ENCODE measurements at regions of chr1 and their contacts with region 1.

Region 1: GRCh38 chr1:204806943-204807687 is 63.5 kb upstream of the NFASC start:
- DNase-seq: peak; percentile 32 to 48
- ATAC-seq: peak; percentile 86 to 92
- H3K4me3 ChIP-seq: peak overlapping the region; percentile 43 to 72 (median 49)
- H3K27ac ChIP-seq: no peak overlapping the region
- H3K4me1 ChIP-seq: no peaks in the 10 kb centered on the region
- H3K27me3 ChIP-seq: no peaks in the 10 kb centered on the region
- CTCF ChIP-seq: peak; percentile 72 to 93 (median 88)
- POLR2A ChIP-seq: no peak

Region 2: DNA sequence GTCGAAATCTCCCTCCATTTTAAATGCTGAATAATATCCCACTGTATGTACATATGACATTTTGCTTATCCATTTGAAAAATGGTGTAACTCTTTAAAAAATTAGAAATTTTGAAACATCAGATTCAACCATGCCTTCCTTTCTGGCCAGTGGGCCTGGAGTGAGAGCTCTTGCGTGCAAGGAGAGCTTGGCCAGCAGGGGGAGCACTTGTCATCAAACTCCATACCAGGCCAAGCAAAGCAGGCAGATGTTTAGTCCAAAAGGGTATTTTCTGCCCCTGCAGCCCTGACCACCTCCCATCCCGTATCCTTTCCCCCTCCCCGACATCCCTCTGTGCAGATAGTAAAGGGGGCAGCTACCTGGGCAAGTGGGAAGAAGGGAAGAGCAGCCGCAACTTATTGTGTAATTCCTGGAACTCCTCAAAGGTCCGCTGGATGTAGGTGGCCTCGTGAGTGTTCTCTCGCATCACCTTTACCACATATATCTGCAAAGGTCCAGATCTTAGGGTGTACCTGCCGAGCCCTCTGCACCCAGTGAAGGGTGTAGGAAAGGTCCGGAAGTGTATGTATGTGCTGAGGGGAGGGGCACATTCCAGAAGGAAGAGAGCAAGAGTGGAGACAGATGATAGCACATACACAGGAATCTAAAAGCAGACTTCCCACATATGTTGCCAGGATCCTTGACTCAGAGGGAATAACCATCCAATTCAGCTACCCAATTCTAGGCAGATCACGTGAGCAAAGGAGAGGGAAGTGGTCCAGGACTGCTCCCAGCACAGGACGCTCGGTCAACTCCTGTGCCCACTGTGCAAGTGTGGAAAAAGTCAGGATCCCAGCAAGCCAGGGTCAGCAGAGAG is 375.6 kb before region 1 on chr1:
- in situ Hi-C with region 1: no loop called
- intact Hi-C with region 1: loop called (anchors 2 kb)
- DNase-seq: peak; percentile 57 to 72
- ATAC-seq: peak; percentile 40
- H3K4me3 ChIP-seq: no peak overlapping the region
- H3K27ac ChIP-seq: peak overlapping the region in 3 of 4 donors; percentile 45 to 89 (median 87)
- H3K4me1 ChIP-seq: peaks cover 9 to 27% of the 10 kb centered on the region in 2 donors
- H3K27me3 ChIP-seq: no peaks in the 10 kb centered on the region
- CTCF ChIP-seq: peak; percentile 73 to 95 (median 90)
- POLR2A ChIP-seq: no peak

Region 3: DNA sequence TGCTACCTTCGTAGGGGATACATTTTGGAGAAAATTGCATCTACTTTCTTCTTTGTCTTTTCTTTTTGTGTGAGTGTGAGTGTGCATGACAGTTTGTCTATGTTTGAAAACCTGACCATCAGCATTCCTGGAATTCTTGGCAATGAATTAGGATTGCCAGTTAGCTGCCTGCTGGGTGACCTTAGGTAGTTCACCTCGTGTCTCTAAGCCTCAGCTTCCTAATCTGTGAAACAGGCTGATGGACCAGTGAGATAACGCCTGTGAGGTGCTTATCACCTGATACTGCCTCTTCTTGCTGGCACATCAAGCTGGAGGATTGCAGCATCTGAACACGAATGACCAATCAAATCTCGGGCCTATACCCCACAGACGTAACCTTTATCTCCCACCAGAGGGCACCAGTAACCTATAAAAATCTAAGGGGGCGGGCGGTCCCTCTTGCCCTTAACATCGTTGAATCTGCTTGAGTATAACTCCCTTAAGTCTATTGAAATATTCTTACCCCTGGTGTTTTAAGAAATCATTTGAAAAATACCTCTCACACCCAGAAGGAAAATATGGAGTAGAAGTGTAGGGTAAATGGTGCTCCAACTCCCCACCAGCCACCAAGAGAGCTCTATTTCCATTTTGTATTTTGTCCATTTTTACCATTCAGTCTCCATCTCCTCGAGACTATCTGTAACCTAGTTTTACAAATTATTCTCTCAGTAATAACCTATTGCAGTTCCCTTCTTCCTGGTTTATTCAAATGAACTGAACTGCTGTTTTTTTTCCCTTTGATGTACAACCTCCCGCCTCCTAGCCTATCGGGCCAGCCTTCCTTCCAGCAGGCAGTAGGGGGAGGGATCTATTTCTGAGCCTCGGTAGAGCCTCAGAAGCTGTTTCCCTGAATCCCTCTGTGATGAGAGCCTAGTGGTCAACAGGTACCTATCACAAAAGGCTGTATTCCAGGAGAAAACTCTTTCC is 241.2 kb before region 1 on chr1:
- in situ Hi-C with region 1: loop called (anchors 5 to 25 kb)
- intact Hi-C with region 1: no loop called
- DNase-seq: peak in 1 of 2 donors; percentile 19
- ATAC-seq: peak; percentile 42 to 59
- H3K4me3 ChIP-seq: no peak overlapping the region
- H3K27ac ChIP-seq: no peak overlapping the region
- H3K4me1 ChIP-seq: no peaks in the 10 kb centered on the region
- H3K27me3 ChIP-seq: no peaks in the 10 kb centered on the region
- CTCF ChIP-seq: peak in 4 of 5 experiments; percentile 26 to 53 (median 38)
- POLR2A ChIP-seq: no peak